AG04450 (cell line): ENCODE measurements at regions of chr15 and their contacts with region 1.

Region 1: DNA sequence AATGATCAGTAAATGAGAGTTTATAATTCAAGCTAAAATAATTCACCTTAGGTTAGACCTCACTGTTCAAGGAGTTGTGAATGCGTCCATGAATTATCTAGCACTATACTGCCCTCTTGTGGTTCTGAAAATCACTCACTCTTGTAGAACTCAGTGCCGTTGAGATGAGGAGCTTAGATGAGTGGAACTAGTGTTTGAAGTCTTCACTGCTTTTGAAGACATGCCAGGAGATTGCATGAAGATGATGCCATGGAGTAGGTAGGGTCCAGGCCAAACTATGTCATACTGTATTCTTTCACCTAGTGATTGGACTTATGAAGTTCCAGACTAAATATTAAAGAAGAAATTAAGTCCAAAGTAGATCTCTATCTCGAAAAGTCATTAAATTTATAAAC is 28.8 kb downstream of the LYSMD4 start:
- DNase-seq: peak; percentile 84
- H3K4me3 ChIP-seq: no peak overlapping the region
- H3K27ac ChIP-seq: no peak overlapping the region
- H3K27me3 ChIP-seq: no peaks in the 10 kb centered on the region
- CTCF ChIP-seq: peak; percentile 74

Region 2: DNA sequence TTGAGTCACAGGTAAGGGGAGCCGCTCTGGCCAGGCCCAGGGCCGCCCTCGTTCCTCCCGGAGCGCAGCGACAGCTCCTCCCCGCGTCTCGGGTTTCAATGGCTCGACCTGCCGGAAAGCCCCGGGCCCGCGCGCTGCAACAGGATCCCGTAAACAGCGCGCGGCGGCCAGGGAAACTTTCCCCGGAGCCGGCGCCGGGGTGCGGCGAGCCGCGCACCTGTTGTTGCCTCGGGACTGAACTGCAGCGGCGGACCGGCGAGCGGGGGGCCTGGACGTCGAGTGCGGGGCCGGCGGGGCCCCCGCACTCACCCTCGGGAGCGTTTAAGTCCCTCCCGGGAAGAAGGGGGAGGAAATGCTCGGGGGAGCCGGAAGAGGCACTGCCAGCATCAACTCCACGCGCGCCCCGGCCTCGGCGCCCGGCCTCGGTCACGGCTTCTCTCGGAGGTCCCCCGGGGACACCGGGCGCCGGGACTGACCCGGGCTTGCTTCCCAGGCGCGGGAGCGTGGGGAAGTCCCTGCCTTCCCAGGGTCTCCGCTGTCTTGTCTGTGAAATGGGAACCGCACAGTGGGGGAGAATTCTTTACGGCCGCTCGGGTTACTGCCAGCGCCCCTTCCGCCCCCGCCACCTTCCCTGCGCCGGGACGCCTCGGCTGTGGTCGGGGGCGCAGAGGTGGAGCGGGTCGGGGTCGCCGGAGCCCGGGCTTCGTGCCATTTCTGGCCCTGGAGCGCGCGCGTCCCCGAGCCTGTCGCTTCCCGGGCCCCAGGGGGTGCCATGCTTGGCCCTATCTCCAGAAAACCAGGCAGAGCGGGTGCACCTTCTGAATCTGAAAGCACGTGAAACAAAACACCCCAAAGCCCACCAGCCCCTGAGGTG is 689.4 kb before region 1 on chr15:
- CTCF ChIA-PET with region 1: no interaction called
- POLR2A ChIA-PET with region 1: no interaction called
- DNase-seq: no peak
- H3K4me3 ChIP-seq: peak overlapping the region; percentile 59
- H3K27ac ChIP-seq: no peak overlapping the region
- H3K27me3 ChIP-seq: no peaks in the 10 kb centered on the region
- CTCF ChIP-seq: no peak

Region 3: GRCh38 chr15:99305761-99306505 is 398.5 kb before region 1 on chr15:
- CTCF ChIA-PET with region 1: interaction called, 24 read pairs
- POLR2A ChIA-PET with region 1: no interaction called
- DNase-seq: peak; percentile 78
- H3K4me3 ChIP-seq: no peak overlapping the region
- H3K27ac ChIP-seq: no peak overlapping the region
- H3K27me3 ChIP-seq: no peaks in the 10 kb centered on the region
- CTCF ChIP-seq: no peak

Region 4: GRCh38 chr15:99361541-99362185 is 342.8 kb before region 1 on chr15:
- CTCF ChIA-PET with region 1: interaction called, 15 read pairs
- POLR2A ChIA-PET with region 1: no interaction called
- DNase-seq: no peak
- H3K4me3 ChIP-seq: no peak overlapping the region
- H3K27ac ChIP-seq: no peak overlapping the region
- H3K27me3 ChIP-seq: no peaks in the 10 kb centered on the region
- CTCF ChIP-seq: peak; percentile 56

Region 5: GRCh38 chr15:99442252-99442897 is 262.1 kb before region 1 on chr15:
- CTCF ChIA-PET with region 1: interaction called, 19 read pairs
- POLR2A ChIA-PET with region 1: no interaction called
- DNase-seq: peak; percentile 67
- H3K4me3 ChIP-seq: no peak overlapping the region
- H3K27ac ChIP-seq: peak overlapping the region; percentile 81
- H3K27me3 ChIP-seq: no peaks in the 10 kb centered on the region
- CTCF ChIP-seq: no peak

Region 6: DNA sequence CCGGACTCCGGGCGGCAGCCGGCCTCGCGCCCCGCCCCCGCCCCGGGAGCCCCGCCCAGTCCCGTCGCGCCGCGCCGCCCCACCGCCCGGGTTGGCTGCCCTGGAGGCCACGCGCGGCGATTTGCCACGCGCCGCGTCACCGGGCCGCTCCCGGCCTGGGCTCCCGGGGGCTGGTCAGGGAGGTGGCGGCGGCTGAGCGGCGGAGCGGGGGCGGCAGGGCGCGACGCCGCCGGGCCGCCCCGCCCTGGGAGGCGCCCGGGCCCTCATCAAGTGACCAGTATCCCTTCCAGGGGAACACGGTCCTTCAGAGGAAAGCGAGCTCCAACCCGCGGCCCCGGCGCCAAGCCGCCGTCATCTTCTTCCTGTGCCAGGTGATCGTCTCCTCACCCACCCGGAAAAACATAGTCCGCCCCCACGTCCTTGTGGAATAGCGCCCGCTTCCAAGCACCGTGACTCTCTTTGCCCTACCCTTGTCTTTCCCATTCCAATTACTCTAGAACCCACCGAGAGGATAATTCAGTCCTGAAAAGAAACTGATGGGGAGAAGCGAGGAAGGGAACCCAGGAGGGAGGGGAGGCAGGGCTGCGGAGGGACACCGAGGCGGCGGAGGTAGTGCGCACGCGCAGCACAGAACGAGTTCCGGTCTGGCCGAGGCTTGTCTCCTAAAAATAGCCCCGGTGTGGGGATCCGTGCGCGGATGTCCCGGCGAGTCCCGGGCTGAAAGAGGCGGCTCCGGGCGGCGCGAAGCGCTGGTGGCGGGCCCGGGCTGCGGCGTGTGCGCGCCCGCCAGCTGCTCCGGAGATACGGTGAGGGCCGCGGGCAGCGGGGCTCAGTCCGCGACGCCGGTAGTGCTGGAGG is 138.9 kb before region 1 on chr15 and contains the start of gene MEF2A:
- CTCF ChIA-PET with region 1: interaction called, 40 read pairs
- POLR2A ChIA-PET with region 1: no interaction called
- DNase-seq: peak; percentile 89
- H3K4me3 ChIP-seq: peak within 1 kb of the TSS; percentile 88
- H3K27ac ChIP-seq: peak within 1 kb of the TSS; percentile 77
- H3K27me3 ChIP-seq: peaks cover 4% of the 10 kb centered on the region
- CTCF ChIP-seq: no peak
- polyA plus RNA-seq, gene MEF2A: 31.4 and 40.9 TPM in 2 replicates

Region 7: GRCh38 chr15:99682455-99682854 is 22.0 kb before region 1 on chr15:
- CTCF ChIA-PET with region 1: interaction called, 18 read pairs
- POLR2A ChIA-PET with region 1: no interaction called
- DNase-seq: peak; percentile 69
- H3K4me3 ChIP-seq: no peak overlapping the region
- H3K27ac ChIP-seq: no peak overlapping the region
- H3K27me3 ChIP-seq: no peaks in the 10 kb centered on the region
- CTCF ChIP-seq: no peak

Region 8: DNA sequence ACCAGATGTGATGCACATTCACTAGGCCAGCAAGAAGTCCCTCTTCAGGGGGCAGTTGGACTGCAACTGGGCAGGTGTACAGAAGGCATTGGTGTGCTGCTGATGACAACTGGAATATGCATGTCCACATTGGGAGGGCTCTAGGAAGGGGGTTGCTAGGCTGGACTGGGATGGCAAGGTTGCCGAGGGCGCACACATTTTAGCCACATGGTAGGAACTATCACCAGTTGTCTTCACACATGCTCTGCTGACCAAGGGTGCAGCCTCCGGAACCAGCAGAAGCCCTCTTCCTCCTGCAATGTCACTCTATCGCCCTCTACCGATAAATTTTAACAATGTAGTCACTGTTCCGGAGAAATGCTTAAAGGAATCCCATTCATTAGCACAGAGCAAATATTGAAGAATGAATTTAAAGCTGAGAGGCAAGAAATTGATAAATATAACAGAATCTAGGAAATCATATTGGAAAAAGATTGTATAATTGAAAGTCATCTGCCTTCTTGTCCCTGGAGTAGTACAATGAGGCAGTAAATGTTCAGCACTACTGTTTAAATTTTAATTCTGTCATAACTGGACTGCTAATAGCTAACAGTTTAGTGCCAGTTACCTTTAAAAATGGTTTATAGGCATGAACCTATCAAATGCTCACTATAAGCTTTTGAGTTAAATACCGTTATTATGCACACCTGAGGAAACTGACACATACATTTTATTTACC is 51.4 kb after region 1 on chr15:
- CTCF ChIA-PET with region 1: interaction called, 49 read pairs
- POLR2A ChIA-PET with region 1: no interaction called
- DNase-seq: peak; percentile 18
- H3K4me3 ChIP-seq: no peak overlapping the region
- H3K27ac ChIP-seq: no peak overlapping the region
- H3K27me3 ChIP-seq: peaks cover 4% of the 10 kb centered on the region
- CTCF ChIP-seq: peak; percentile 89

Region 9: DNA sequence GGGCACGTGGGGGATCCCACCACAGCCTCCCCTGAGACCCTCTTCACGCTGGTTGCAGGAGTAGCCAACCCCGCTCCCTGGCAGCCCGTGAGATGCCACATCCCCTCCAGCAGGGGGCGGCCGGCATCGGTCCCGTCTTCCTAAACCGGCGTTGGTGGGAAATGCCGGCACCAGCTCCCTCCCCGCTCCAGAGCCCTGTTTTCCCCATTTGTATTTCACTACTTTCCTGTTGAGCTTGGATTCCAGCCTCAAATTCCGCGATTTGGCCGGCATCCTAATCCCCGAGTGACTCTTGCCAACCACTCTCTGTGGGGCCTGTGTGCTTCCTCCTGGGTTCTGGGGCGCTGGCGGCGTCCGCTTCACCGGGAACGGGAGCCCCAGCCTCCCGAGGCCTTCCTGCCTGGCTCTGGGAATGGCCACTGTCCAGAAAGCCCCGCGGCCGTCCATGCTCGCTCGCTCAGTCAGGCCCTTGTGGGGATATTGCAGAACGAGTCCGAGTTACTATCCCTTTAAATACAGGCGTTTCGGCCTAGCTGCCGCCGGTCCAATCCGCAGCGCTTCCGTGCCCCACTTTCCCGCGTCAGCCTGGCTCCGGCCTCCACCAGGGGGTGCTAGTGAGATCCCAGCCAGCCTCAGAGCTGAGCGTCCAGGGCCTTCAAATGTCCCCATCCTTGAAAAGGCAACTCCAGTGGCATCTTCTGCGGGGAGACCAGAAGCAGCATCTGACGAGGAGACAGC is 645.4 kb after region 1 on chr15:
- CTCF ChIA-PET with region 1: no interaction called
- POLR2A ChIA-PET with region 1: no interaction called
- DNase-seq: peak; percentile 38
- H3K4me3 ChIP-seq: peak overlapping the region; percentile 61
- H3K27ac ChIP-seq: no peak overlapping the region
- H3K27me3 ChIP-seq: no peaks in the 10 kb centered on the region
- CTCF ChIP-seq: peak; percentile 77